Heart left ventricle (tissue), 16 donors: ENCODE measurements at regions of chr2 and their contacts with region 1.

Region 1: DNA sequence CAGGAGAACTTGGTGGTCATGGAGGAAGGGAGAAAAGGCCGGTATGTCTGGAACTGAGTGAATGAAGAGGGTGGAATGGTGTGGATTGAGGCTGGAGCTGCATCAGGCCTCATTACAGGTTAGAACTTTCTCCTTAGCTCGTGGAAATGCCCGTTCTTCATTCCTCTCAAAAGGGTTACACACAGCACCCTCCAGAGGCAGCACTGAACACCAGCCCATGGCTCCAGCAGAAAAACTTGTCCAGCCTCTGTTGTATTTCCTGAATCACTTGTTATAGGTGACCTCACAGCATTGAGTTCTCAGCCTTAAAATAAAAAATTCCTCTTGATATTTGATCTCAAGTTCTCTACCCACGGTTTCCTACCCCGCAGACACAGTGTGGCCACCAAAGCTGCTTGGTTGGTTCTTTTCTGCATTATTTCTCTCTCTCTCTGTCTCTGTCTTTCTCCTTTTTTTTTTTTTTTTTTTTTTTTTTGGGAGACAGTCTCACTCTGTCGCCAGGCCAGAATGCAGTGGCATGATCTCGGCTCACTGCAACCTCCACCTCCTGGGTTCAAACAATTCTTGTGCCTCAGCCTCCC is 89.6 kb downstream of the ITGB1BP1 start:
- DNase-seq: peak in 4 of 5 donors; percentile 61 to 68 (median 63)
- ATAC-seq: peak; percentile 68 to 87 (median 83)
- H3K4me3 ChIP-seq: no peak overlapping the region
- H3K27ac ChIP-seq: peak overlapping the region in 4 of 12 donors; percentile 10 to 31 (median 15)
- H3K4me1 ChIP-seq: peaks cover 0 to 65% (median 20%) of the 10 kb centered on the region in 12 donors
- H3K27me3 ChIP-seq: no peaks in the 10 kb centered on the region
- CTCF ChIP-seq: peak; percentile 61 to 82 (median 70)
- POLR2A ChIP-seq: no peak

Region 2: GRCh38 chr2:8882094-8882493 is 451.6 kb before region 1 on chr2:
- intact Hi-C with region 1: loop called in 1 of 10 experiments (anchors 10 kb)
- DNase-seq: no peak
- ATAC-seq: no peak
- H3K4me3 ChIP-seq: no peak overlapping the region
- H3K27ac ChIP-seq: no peak overlapping the region
- H3K4me1 ChIP-seq: peaks cover 0 to 8% (median 0%) of the 10 kb centered on the region in 12 donors
- H3K27me3 ChIP-seq: no peaks in the 10 kb centered on the region
- CTCF ChIP-seq: no peak
- POLR2A ChIP-seq: no peak

Region 3: DNA sequence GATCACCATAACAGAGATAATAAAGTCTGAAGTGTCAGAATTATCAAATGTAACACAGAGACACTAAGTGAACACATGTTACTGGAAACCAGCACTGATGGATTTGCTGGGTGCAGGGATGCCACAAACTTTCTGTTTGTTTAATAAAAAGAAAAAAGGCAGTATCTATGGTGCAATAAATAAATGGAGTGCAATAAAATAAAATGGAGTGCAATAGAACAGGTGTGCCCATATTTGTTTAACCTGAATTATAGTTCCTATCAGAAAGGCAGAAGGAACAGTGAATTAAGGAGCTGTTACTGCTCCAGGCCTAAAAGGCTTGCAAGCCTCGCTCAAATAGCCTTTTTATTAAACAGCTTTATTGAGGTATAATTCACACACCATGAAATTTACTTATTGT is 415.3 kb before region 1 on chr2:
- intact Hi-C with region 1: no loop called
- DNase-seq: no peak
- ATAC-seq: no peak
- H3K4me3 ChIP-seq: no peak overlapping the region
- H3K27ac ChIP-seq: no peak overlapping the region
- H3K4me1 ChIP-seq: no peaks in the 10 kb centered on the region
- H3K27me3 ChIP-seq: no peaks in the 10 kb centered on the region
- CTCF ChIP-seq: no peak
- POLR2A ChIP-seq: no peak

Region 4: DNA sequence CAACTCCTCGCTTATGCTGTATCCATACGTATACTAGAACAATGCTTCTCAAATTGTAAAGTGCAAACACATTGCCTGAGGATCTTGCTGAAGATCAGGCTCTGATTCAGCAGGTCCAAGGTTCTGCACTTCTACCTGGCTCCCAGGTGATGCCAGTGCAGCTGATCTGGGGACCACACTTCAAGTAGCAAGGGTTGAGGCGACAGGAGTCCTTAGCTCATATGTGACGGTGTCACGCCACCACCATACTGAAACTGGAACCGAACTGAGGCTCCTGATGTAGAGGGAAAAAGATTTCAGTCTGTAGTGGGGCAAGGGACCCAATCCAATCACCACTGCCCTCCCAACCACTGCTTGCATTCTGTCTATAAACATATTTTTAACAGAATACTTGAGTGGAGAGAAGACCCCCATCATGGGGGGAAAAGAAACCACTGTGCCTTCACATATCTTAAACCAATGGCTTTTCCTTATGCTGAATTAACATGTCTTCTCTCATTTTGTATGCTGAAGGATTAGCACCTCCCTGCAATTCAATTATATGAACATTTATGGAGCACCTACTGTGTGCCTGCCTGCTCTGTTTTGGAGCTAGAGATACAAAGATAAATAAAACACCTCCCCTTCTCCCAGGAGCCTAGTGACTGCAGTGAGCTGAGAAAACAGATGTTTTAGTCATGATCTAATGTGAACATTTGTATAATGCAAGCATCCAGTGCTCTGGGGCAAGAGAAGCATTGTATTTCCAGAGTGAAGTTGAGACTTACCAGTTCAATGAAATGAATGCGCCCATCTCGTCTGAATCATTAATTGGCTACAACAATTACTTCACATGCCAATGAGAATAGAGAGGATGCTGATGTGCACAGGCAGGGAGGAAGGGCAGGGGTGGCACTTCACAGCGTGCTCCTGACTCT is 133.7 kb before region 1 on chr2:
- intact Hi-C with region 1: loop called in 6 of 10 experiments (anchors 5 kb)
- DNase-seq: no peak
- ATAC-seq: no peak
- H3K4me3 ChIP-seq: no peak overlapping the region
- H3K27ac ChIP-seq: no peak overlapping the region
- H3K4me1 ChIP-seq: peaks cover 0 to 3% (median 0%) of the 10 kb centered on the region in 12 donors
- H3K27me3 ChIP-seq: no peaks in the 10 kb centered on the region
- CTCF ChIP-seq: no peak
- POLR2A ChIP-seq: no peak

Region 5: DNA sequence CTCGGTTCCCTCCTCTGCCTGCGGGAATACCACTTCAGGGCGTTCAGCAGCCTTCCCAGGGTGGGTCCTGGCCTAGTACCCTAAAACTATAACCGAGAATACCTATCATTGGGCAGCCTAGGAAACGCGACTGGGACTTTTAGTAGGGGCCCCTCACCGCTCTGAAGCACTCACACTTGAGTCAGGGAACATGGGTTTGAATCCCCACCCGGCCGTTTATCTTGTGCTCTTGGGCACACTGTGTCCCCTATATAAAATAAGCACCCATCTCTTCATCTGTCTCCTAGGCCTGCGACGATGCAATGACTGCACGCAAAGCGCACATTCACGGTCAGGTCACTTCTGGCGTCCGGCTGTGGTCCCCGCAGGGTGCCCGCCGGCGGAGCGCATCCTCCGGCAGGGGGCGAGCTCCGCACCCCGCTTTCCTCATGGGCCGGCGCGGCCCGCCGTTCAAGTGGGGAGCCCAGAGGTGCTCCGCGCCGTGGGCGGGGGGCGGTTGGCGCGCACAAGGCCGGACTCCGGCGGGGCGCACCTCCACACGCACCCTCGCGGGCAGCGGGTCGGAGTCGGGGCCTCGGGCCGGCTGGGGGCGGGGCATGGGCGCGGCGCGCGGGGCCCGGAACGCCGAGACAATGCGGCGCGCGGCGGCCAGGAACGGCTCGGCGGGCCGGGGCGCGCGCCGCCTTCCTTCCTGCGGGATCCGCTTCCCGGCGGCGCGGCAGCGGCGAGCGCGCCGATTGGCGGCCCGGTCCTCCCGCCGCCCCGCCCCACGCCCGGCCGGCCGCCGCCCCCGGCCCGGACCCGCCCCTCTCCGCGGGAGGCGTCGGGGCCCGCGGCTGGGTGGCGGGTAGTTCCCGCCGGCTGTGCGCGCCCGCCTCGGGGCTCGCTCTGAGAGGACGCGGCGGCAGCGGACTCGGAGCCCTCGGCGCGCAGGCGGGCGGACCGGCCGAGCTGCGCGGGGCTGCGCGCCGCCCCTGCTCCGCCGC is 127.4 kb before region 1 on chr2 and contains the start of gene ASAP2:
- intact Hi-C with region 1: loop called in 9 of 10 experiments (anchors 1 to 5 kb)
- DNase-seq: peak; percentile 74 to 89 (median 77)
- ATAC-seq: peak; percentile 63 to 85 (median 82)
- H3K4me3 ChIP-seq: peak within 1 kb of the TSS; percentile 60 to 99 (median 86)
- H3K27ac ChIP-seq: peak within 1 kb of the TSS; percentile 56 to 94 (median 88)
- H3K4me1 ChIP-seq: peaks cover 0 to 40% (median 18%) of the 10 kb centered on the region in 12 donors
- H3K27me3 ChIP-seq: peaks cover 0 to 12% (median 0%) of the 10 kb centered on the region in 9 donors
- CTCF ChIP-seq: peak; percentile 65 to 94 (median 82)
- POLR2A ChIP-seq: no peak
- total RNA-seq, gene ASAP2: 7.4 to 17.0 (median 12.9) TPM

Region 6: DNA sequence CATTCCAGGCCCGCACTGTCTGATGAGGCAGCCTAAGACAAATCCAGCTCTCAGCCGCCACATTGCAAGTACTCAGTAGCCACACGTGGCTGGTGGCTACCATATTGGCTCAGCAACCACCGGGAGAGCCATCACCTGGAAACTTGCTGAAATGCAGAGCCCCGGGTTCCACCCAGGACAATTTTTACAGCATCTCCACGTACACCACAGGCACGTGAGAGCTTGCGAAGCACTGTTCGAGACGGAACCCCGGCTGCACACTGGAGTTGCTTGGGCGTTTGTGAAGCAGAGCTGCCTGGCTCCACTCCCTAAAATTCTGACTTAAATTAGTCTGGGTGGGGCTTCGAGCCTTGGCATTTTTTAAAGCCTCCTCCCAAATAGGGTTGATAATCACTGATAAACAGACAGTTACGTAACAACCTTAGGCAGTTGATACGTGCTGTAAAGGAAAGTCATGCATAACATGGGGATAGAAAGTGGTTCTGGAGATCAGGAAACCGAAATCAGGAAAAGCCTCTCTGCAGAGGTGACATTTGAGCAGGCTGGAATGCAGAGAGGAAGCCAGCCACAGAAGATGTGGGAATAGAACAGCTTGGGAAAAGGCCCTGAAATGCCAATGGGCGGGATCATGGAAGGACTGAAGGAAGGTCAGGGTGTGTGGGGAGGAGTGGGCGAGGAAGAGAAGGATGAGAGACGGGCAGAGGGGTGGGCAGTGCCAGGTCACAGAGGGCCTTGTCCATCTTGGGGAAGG is 120.8 kb before region 1 on chr2:
- intact Hi-C with region 1: loop called in 5 of 10 experiments (anchors 5 kb)
- DNase-seq: no peak
- ATAC-seq: peak in 3 of 4 donors; percentile 30 to 52 (median 36)
- H3K4me3 ChIP-seq: peak overlapping the region in 2 of 12 donors; percentile 8
- H3K27ac ChIP-seq: peak overlapping the region; percentile 31 to 80 (median 64)
- H3K4me1 ChIP-seq: peaks cover 0 to 79% (median 47%) of the 10 kb centered on the region in 12 donors
- H3K27me3 ChIP-seq: peaks cover 0 to 2% (median 0%) of the 10 kb centered on the region in 9 donors
- CTCF ChIP-seq: no peak
- POLR2A ChIP-seq: no peak